Activated naive CD4-positive, alpha-beta T cell treated with anti-CD3 and anti-CD28 coated beads, Interleukin-2, amount 10 ng/mL, durations not matched to agents 7 days and 5 days (primary cell): ENCODE measurements at regions of chr14 and their contacts with region 1.

Region 1: DNA sequence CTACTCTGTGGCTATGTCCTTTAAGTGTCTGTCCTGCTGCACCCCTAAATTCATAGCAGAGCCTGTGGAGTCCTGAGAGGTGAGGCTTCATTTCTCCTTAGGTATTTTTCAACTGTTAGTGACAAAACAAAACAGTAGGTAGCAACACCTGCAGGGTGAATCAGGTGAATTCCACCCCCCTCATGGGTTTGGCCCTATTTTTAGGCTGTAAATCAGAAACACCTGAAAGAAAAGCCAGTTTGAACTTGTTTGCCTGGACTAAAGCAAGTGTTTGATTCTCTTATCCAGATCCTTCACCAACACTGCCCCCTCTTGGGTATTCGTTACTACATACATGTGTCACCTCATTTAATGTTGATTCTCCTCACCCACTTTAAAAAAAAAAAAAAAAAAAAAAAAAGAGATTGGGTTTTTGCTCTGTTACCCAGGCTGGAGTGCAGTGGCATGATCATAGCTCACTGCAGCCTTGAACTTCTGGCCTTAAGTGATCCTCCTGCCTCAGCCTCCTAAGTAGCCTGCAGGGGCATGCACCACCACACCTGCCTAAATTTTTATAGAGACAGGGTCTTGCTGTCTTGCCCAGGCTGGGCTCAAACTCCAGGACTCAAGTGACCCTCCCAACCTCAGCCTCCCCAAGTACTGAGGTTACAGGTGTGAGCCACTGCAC is 10.3 kb downstream of the TBPL2 start:
- DNase-seq: peak; percentile 58
- H3K4me3 Mint-ChIP-seq: no peak overlapping the region
- H3K27ac Mint-ChIP-seq: no peak overlapping the region
- H3K4me1 Mint-ChIP-seq: peaks cover 28% of the 10 kb centered on the region
- H3K27me3 Mint-ChIP-seq: peaks cover 3% of the 10 kb centered on the region

Region 2: GRCh38 chr14:55180434-55180833 is 249.7 kb before region 1 on chr14:
- CTCF ChIA-PET with region 1: no interaction called
- DNase-seq: no peak
- H3K4me3 Mint-ChIP-seq: no peak overlapping the region
- H3K27ac Mint-ChIP-seq: peak overlapping the region; percentile 52
- H3K4me1 Mint-ChIP-seq: peaks cover 6% of the 10 kb centered on the region
- H3K27me3 Mint-ChIP-seq: no peaks in the 10 kb centered on the region

Region 3: DNA sequence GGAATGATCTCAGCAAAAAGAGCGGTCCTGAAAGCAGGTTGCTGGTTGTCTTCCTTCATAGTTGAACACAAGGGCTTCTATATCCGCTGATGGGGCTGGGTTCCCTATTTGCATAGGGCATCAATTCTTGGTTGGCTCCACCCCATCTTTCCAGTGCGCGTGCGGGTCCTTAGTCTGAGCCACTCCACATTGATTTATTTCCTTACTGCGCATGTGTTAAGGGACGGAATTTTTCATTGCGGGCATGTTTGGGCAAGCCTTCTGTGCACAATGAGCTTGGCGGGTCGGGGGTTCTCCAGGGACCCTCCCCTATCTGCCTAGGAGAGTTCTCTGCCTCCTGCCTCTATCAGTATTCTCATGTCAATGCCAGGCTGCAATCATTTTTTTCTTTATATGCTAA is 217.5 kb before region 1 on chr14:
- CTCF ChIA-PET with region 1: interaction called, 26 read pairs
- DNase-seq: no peak
- H3K4me3 Mint-ChIP-seq: no peak overlapping the region
- H3K27ac Mint-ChIP-seq: no peak overlapping the region
- H3K4me1 Mint-ChIP-seq: peaks cover 4% of the 10 kb centered on the region
- H3K27me3 Mint-ChIP-seq: peaks cover 11% of the 10 kb centered on the region

Region 4: DNA sequence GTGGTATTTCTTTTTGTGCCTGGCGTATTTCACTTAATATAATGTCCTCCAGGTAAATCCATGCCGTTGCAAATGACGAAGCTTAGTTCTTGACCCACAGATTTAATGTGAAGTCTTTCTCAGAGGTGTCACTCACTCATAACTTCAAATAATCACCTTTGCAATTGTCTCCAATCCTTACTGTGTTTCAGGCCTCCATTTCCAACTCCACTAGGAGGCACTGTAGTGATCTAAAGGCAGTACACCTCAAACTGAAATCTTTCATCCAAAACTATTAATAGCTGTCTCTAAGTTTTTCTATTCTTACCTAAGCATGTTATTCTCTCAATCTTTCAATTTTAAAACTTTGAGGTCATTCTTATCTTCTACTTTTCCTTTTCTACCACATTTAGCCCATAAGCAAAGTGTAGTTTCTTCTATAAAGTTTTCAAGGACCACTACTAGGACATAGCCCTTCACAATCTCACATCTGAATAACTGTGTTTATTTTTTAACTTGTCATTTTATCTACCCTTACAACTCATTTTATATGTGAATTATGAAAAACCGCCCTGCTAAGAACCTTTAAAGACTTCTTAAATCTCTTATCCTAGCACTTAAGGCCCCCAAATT is 184.4 kb before region 1 on chr14:
- CTCF ChIA-PET with region 1: interaction called, 10 read pairs
- DNase-seq: peak; percentile 47
- H3K4me3 Mint-ChIP-seq: no peak overlapping the region
- H3K27ac Mint-ChIP-seq: no peak overlapping the region
- H3K4me1 Mint-ChIP-seq: no peaks in the 10 kb centered on the region
- H3K27me3 Mint-ChIP-seq: peaks cover 37% of the 10 kb centered on the region

Region 5: DNA sequence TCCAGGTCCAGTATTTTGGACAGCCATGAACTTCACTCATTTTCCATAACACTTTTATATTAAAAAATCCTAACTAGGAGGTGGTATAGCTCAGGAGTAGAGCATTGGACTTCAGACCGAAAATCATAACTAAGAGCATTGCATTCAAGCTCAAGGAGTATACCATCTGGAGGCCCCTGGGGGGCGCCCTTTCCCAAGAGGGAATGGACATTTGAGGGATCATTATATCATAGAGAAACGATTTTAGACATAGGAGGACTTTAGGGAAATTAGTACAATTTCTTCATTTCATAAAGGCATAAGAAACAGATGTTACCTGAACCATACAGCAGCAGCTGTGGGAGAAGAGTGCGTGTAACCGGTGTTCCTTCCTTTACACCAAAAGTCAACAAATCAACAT is 13.3 kb before region 1 on chr14:
- CTCF ChIA-PET with region 1: interaction called, 44 read pairs
- DNase-seq: peak; percentile 42
- H3K4me3 Mint-ChIP-seq: no peak overlapping the region
- H3K27ac Mint-ChIP-seq: no peak overlapping the region
- H3K4me1 Mint-ChIP-seq: peaks cover 11% of the 10 kb centered on the region
- H3K27me3 Mint-ChIP-seq: no peaks in the 10 kb centered on the region

Region 6: DNA sequence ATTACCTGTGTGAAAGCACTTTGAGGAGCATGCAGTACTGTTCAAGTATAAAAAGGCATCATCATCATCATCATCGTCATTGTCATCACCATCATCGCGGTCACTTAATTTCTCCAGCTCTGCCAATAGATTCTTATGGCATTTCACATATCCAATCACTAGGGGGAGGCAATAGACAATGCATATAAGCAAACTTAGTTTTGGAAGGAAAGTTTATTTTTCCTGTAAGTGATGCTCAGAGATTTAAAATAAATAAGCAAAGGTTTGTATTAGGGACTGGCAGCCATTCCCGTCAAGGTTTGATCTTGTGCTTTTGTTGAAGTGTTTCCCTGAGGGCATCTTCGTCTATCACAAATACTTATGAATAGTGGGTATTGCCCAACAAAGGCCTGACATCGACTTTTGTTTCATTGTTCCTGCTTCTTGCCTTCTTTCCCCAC is 277.2 kb after region 1 on chr14:
- CTCF ChIA-PET with region 1: no interaction called
- DNase-seq: no peak
- H3K4me3 Mint-ChIP-seq: no peak overlapping the region
- H3K27ac Mint-ChIP-seq: peak overlapping the region; percentile 35
- H3K4me1 Mint-ChIP-seq: no peaks in the 10 kb centered on the region
- H3K27me3 Mint-ChIP-seq: no peaks in the 10 kb centered on the region